Activated naive CD4-positive, alpha-beta T cell treated with anti-CD3 and anti-CD28 coated beads for 36 hours (primary cell): ENCODE measurements at regions of chr1 and their contacts with region 1.

Region 1: GRCh38 chr1:206803221-206803730 is 31.0 kb upstream of the IL10 start:
- DNase-seq: peak; percentile 92
- H3K4me3 Mint-ChIP-seq: no peak overlapping the region
- H3K27ac Mint-ChIP-seq: peak overlapping the region; percentile 82
- H3K4me1 Mint-ChIP-seq: peaks cover 59% of the 10 kb centered on the region
- H3K27me3 Mint-ChIP-seq: peaks cover 7% of the 10 kb centered on the region

Region 2: GRCh38 chr1:206050655-206051235 is 752.5 kb before region 1 on chr1:
- CTCF ChIA-PET with region 1: no interaction called
- intact Hi-C with region 1: loop called (anchors 5 kb)
- DNase-seq: peak; percentile 87
- H3K4me3 Mint-ChIP-seq: no peak overlapping the region
- H3K27ac Mint-ChIP-seq: peak overlapping the region; percentile 60
- H3K4me1 Mint-ChIP-seq: peaks cover 47% of the 10 kb centered on the region
- H3K27me3 Mint-ChIP-seq: peaks cover 11% of the 10 kb centered on the region

Region 3: GRCh38 chr1:206590025-206590758 is 213.1 kb before region 1 on chr1:
- CTCF ChIA-PET with region 1: no interaction called
- intact Hi-C with region 1: loop called (anchors 5 kb)
- DNase-seq: peak; percentile 89
- H3K4me3 Mint-ChIP-seq: peak overlapping the region; percentile 52
- H3K27ac Mint-ChIP-seq: peak overlapping the region; percentile 100
- H3K4me1 Mint-ChIP-seq: peaks cover 72% of the 10 kb centered on the region
- H3K27me3 Mint-ChIP-seq: no peaks in the 10 kb centered on the region

Region 4: GRCh38 chr1:206706298-206706791 is 96.9 kb before region 1 on chr1:
- CTCF ChIA-PET with region 1: interaction called, 6 read pairs
- intact Hi-C with region 1: loop called (anchors 1 kb)
- DNase-seq: peak; percentile 84
- H3K4me3 Mint-ChIP-seq: no peak overlapping the region
- H3K27ac Mint-ChIP-seq: peak overlapping the region; percentile 71
- H3K4me1 Mint-ChIP-seq: peaks cover 84% of the 10 kb centered on the region
- H3K27me3 Mint-ChIP-seq: no peaks in the 10 kb centered on the region

Region 5: DNA sequence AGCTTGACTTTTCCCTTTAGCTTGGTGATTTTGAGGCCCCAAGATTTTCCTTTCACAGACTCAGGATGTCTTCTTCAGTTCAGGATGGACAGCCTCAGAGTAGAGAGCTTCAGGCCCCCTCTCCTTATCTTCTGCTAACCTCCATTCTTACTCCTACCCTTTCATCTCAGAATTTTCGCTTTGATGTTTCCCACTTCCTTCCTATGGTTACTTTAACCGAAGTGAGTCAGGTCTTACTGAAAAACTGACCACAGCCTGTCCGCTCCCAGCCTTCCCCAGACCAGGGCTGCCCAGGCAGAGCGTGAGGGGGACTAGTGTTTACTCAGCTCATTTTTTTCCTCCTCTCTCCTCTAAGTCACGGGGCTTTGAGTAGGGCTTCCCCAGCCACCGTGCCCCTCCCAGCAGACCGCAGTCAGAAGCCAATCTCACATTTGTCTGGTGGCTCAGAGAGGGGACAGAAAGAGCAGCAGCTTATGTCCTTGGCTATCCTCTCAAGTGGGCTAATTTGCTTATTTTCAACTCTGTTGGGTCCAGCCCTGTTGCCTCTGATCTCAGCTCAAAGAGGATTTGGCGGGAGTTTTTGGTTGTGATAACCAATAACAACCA is 36.9 kb before region 1 on chr1:
- CTCF ChIA-PET with region 1: interaction called, 28 read pairs
- intact Hi-C with region 1: loop called (anchors 1 kb)
- DNase-seq: peak; percentile 79
- H3K4me3 Mint-ChIP-seq: no peak overlapping the region
- H3K27ac Mint-ChIP-seq: no peak overlapping the region
- H3K4me1 Mint-ChIP-seq: peaks cover 63% of the 10 kb centered on the region
- H3K27me3 Mint-ChIP-seq: peaks cover 7% of the 10 kb centered on the region

Region 6: DNA sequence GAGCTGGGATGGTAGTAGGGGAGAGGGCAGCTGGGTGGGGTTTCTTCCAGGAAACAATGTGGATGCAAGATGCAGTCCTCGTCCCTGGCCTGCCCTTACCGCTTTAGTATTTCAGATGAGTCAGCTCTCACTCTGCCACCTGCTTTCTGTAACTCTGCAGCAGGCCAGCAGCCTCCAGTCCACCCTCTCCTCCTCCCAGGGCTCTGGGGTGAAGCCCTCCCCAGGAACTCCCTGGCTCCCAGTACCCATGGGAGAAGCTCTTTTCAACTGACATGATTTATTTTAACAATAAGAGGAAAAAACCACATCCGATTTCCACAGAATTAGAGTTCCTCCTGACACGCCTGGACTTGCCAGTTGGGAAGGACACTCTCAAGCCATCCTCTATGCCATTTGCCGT is 23.1 kb after region 1 on chr1:
- CTCF ChIA-PET with region 1: no interaction called
- intact Hi-C with region 1: no loop called
- DNase-seq: no peak
- H3K4me3 Mint-ChIP-seq: no peak overlapping the region
- H3K27ac Mint-ChIP-seq: no peak overlapping the region
- H3K4me1 Mint-ChIP-seq: peaks cover 26% of the 10 kb centered on the region
- H3K27me3 Mint-ChIP-seq: no peaks in the 10 kb centered on the region

Region 7: GRCh38 chr1:206895830-206896242 is 92.6 kb after region 1 on chr1:
- CTCF ChIA-PET with region 1: interaction called, 6 read pairs
- intact Hi-C with region 1: loop called (anchors 2 kb)
- DNase-seq: no peak
- H3K4me3 Mint-ChIP-seq: no peak overlapping the region
- H3K27ac Mint-ChIP-seq: peak overlapping the region; percentile 22
- H3K4me1 Mint-ChIP-seq: peaks cover 92% of the 10 kb centered on the region
- H3K27me3 Mint-ChIP-seq: no peaks in the 10 kb centered on the region

Region 8: DNA sequence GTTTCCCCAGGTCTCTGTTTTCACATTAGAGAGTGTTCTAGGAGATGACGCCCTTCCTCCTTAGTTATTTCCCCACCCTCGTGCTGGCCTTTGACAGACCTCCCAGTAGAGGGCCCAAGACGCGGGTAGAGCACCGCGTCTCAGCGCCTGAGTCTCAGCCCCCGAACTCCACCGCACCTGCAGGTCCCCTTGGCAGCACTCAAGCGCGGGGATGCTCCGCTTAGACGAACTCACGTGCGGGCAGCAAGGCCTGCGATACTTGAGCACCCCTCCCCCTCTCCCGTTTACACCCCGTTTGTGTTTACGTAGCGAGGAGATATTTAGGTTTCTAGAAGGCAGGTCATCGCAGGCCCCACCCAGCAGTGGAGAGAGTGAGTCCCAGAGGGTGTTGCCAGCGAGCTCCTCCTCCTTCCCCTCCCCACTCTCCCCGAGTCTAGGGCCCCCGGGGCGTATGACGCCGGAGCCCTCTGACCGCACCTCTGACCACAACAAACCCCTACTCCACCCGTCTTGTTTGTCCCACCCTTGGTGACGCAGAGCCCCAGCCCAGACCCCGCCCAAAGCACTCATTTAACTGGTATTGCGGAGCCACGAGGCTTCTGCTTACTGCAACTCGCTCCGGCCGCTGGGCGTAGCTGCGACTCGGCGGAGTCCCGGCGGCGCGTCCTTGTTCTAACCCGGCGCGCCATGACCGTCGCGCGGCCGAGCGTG is 518.0 kb after region 1 on chr1 and contains the start of gene CD55:
- CTCF ChIA-PET with region 1: no interaction called
- intact Hi-C with region 1: loop called (anchors 1 kb)
- DNase-seq: peak; percentile 99
- H3K4me3 Mint-ChIP-seq: peak within 1 kb of the TSS; percentile 96
- H3K27ac Mint-ChIP-seq: peak within 1 kb of the TSS; percentile 98
- H3K4me1 Mint-ChIP-seq: peaks cover 34% of the 10 kb centered on the region
- H3K27me3 Mint-ChIP-seq: no peaks in the 10 kb centered on the region
- total RNA-seq, gene CD55: 62.1 to 66.0 TPM